ENCODE measurements at regions of chr16 and their contacts with region 1.

Region 1: DNA sequence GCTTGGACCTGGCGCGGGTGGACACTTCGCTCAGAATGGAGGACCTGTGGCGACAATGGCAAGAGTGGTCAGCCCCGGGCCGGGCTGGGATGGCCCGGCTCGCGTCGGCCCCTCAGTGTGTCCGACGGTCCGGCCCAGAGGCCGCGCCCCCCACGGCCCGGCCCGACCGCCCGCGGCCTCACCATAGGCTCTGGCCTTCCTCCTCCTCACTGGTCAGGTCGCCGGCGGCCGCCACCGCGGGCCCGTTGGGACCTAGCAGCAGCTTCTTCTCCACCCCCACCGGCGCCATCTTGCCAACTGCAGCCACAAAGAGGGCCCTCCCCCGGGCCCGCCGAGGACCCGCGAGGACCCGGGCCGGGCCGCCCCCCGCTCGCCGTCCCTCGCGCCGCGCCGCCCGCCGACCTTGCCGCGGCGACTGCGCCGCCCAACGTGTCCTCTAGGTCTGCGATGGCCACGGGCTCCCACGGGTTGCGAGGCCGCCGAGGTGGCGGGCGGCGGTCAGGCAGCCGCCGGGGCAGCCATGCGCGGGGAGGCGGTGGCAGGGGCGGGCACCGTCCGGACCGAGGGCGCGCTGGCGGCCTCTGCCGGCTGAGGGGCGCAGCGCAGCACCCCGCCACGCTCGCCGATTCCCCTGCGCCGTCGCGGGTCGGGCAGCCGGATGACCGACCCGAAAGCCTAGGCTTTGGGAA is at the start of gene DYNC1LI2:
- DNase-seq: peak; percentile 47 to 92 (median 84)

Region 2: DNA sequence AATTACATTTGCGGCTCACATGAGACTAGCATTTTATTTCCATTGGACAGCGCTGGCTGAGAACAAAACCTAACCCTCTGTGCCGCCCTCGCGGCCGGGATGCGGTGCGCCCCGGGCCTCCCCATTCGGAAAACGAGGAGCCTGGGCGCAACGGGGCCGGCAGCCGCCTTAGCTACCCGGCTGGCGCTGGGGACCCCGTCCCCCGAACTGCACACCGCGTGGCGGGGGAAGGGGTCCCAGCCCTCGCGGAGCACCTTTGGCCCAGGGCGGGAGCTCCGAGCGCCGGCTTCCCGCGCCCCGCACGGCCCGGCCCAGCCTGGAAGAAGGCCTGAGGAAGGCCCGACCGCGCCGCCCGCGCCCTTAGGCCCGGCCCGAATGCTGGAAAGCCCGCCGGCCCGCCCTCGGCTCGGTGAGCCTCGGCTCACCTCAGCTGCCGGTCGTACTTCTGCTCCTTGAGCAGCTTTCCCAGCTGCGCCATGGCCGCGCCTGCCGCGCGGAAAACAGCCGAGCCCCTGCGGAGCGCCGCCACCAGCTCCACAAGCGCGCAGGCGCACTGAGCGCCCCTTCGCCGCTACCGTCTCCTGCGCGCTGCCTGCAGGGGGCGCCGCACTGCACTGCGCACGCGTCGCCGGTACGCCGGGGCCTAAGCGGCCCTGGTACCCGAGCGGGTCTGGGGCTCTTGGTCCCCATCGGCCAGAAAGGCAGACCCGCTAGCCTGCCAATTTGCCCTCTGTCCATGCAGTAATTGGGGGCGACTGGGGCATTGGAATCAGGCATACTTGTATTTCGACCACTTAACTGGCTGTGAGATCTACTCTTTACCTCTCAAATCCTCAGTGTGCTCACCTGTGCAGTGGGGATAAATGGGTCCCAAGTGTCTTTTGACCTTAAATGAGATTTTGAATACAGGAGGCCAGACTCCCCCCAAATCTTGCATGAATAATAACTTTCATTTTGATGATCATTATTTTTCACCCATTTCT is 79.3 kb after region 1 on chr16 and contains the start of gene NAE1:
- intact Hi-C with region 1: loop called (anchors 5 kb)
- DNase-seq: peak; percentile 39 to 94 (median 86)

Measured in head of caudate nucleus (tissue), 42 donors.